Natural killer cell (primary cell): ENCODE measurements at regions of chr17 and their contacts with region 1.

Region 1: GRCh38 chr17:58317421-58318064 is 11.1 kb downstream of the TSPOAP1 start:
- DNase-seq: peak; percentile 64 to 90
- ATAC-seq: peak; percentile 94 to 97 (median 95)
- H3K4me3 ChIP-seq: no peak overlapping the region
- H3K4me3 Mint-ChIP-seq: peak overlapping the region; percentile 47
- H3K27ac ChIP-seq: peak overlapping the region; percentile 71
- H3K27ac Mint-ChIP-seq: peak overlapping the region; percentile 90 to 92
- H3K4me1 ChIP-seq: peaks cover 34% of the 10 kb centered on the region
- H3K4me1 Mint-ChIP-seq: peaks cover 23 to 39% of the 10 kb centered on the region in 2 donors
- H3K27me3 ChIP-seq: no peaks in the 10 kb centered on the region
- H3K27me3 Mint-ChIP-seq: no peaks in the 10 kb centered on the region
- CTCF ChIP-seq: peak; percentile 83

Region 2: DNA sequence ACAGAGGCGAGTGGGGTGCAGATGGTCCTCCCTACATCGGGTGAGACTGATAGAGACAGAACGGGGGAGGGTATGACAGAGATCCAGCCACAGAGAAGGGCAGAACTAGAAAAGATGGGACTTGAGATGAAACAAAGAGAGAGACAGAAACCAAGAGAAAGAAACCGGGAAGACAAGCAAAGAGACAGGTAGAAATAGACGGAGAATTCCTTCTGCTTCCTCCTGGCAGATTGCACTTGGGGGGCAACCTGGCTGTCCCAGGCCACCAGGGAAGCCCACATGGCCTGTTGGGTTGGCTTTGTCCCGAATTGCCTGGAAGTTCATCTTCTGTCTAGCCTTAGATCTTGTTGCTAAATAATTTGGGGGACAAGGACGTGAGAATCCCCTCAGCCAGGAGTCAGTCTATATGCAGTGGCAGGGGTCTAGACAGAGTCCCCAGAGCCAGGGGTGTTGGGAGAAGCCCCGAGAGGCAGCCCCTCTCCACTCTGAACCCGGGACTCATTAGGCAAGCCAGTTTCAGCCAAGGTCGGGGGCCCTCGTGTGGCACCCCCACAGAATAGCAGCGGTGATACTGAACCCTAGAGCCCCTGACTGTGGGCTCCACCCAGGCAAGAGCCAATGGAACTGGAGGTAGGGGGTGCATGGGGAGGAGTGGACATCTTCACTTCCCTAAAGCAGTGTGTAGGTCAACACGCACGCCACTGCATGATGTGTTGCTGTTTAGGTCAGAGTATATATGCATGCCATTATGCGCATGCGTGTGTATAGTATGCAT is 11.7 kb after region 1 on chr17:
- intact Hi-C with region 1: loop called (anchors 1 kb)
- DNase-seq: peak; percentile 70 to 83
- ATAC-seq: peak; percentile 32 to 67 (median 33)
- H3K4me3 ChIP-seq: peak overlapping the region; percentile 94
- H3K4me3 Mint-ChIP-seq: peak overlapping the region; percentile 90
- H3K27ac ChIP-seq: peak overlapping the region; percentile 84
- H3K27ac Mint-ChIP-seq: peak overlapping the region; percentile 87 to 93
- H3K4me1 ChIP-seq: peaks cover 62% of the 10 kb centered on the region
- H3K4me1 Mint-ChIP-seq: peaks cover 68 to 86% of the 10 kb centered on the region in 2 donors
- H3K27me3 ChIP-seq: no peaks in the 10 kb centered on the region
- H3K27me3 Mint-ChIP-seq: no peaks in the 10 kb centered on the region
- CTCF ChIP-seq: peak; percentile 75

Region 3: GRCh38 chr17:58344047-58344790 is 26.7 kb after region 1 on chr17:
- intact Hi-C with region 1: loop called (anchors 1 kb)
- DNase-seq: peak; percentile 83 to 97
- ATAC-seq: peak; percentile 75 to 93 (median 87)
- H3K4me3 ChIP-seq: peak overlapping the region; percentile 59
- H3K4me3 Mint-ChIP-seq: peak overlapping the region; percentile 90
- H3K27ac ChIP-seq: peak overlapping the region; percentile 99
- H3K27ac Mint-ChIP-seq: peak overlapping the region; percentile 87 to 93
- H3K4me1 ChIP-seq: peaks cover 74% of the 10 kb centered on the region
- H3K4me1 Mint-ChIP-seq: peaks cover 79 to 88% of the 10 kb centered on the region in 2 donors
- H3K27me3 ChIP-seq: no peaks in the 10 kb centered on the region
- H3K27me3 Mint-ChIP-seq: no peaks in the 10 kb centered on the region
- CTCF ChIP-seq: no peak

Region 4: GRCh38 chr17:58352014-58352842 is 34.7 kb after region 1 on chr17 and contains the start of gene SUPT4H1:
- intact Hi-C with region 1: loop called (anchors 1 kb)
- DNase-seq: peak; percentile 88 to 97
- ATAC-seq: peak; percentile 91 to 97 (median 95)
- H3K4me3 ChIP-seq: peak within 1 kb of the TSS; percentile 87
- H3K4me3 Mint-ChIP-seq: peak within 1 kb of the TSS; percentile 98
- H3K27ac ChIP-seq: peak within 1 kb of the TSS; percentile 93
- H3K27ac Mint-ChIP-seq: peak within 1 kb of the TSS; percentile 96 to 97
- H3K4me1 ChIP-seq: peaks cover 23% of the 10 kb centered on the region
- H3K4me1 Mint-ChIP-seq: peaks cover 65 to 68% of the 10 kb centered on the region in 2 donors
- H3K27me3 ChIP-seq: no peaks in the 10 kb centered on the region
- H3K27me3 Mint-ChIP-seq: no peaks in the 10 kb centered on the region
- CTCF ChIP-seq: no peak
- total RNA-seq, gene SUPT4H1: 55.9 to 68.3 (median 68.1) TPM

Region 5: GRCh38 chr17:58417300-58418092 is 100.0 kb after region 1 on chr17 and contains the start of gene RNF43:
- intact Hi-C with region 1: loop called (anchors 1 kb)
- DNase-seq: peak; percentile 70 to 95
- ATAC-seq: peak; percentile 100
- H3K4me3 ChIP-seq: no peak within 1 kb of the TSS
- H3K4me3 Mint-ChIP-seq: no peak within 1 kb of the TSS
- H3K27ac ChIP-seq: peak within 1 kb of the TSS; percentile 3
- H3K27ac Mint-ChIP-seq: peak within 1 kb of the TSS; percentile 72 to 84
- H3K4me1 ChIP-seq: peaks cover 5% of the 10 kb centered on the region
- H3K4me1 Mint-ChIP-seq: peaks cover 13 to 15% of the 10 kb centered on the region in 2 donors
- H3K27me3 ChIP-seq: no peaks in the 10 kb centered on the region
- H3K27me3 Mint-ChIP-seq: no peaks in the 10 kb centered on the region
- CTCF ChIP-seq: peak; percentile 72
- total RNA-seq, gene RNF43: 0.95 to 1.1 (median 1.0) TPM

Region 6: DNA sequence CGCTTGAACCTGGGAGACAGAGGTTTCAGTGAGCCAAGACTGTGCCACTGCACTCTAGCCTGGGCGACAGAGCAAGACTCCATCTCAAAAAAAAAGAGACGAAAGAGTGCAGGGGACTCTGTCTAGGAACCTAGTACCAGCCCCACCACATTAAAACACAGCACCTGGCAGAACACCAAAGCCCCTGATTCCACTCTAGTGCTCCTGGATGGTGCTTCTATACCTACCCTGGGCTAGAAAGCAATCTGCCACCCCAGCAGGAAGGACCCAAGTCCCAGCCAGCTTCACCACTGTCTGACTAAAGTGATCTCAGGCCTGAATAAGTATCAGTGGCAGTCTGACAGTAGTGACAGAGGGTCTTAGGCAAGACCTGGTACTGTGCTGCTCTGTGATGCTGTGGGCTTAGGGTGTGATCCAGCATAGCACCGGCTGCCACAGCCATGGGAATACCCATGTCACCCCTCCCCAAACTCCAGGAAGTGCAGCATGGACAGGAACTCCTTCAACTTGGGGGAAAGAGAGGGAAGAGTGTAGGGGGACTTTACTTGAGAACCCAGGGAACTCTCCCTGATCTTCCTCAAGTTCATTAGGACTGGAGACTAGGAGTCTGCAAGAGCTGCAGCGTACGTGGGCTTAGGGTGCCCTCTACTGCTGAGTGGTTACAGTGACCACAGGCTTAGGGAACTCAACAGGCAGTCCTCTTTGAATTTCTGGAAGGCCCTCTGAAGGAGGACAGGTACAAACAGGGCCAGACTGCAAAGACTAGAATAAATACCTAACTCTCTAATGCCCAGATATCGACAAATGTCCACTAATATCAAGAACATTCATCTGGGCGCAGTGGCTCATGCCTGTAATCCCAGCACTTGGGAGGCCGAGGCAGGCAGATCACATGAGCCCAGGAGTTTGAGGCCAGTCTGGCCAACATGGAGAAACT is 129.8 kb after region 1 on chr17:
- intact Hi-C with region 1: loop called (anchors 1 kb)
- DNase-seq: peak; percentile 56 to 80
- ATAC-seq: peak; percentile 77 to 94 (median 89)
- H3K4me3 ChIP-seq: no peak overlapping the region
- H3K4me3 Mint-ChIP-seq: no peak overlapping the region
- H3K27ac ChIP-seq: no peak overlapping the region
- H3K27ac Mint-ChIP-seq: no peak overlapping the region
- H3K4me1 ChIP-seq: no peaks in the 10 kb centered on the region
- H3K4me1 Mint-ChIP-seq: peaks cover 5% of the 10 kb centered on the region in 2 donors
- H3K27me3 ChIP-seq: no peaks in the 10 kb centered on the region
- H3K27me3 Mint-ChIP-seq: no peaks in the 10 kb centered on the region
- CTCF ChIP-seq: peak; percentile 77

Region 7: GRCh38 chr17:58487589-58488427 is 170.3 kb after region 1 on chr17 and contains the start of gene HSF5:
- intact Hi-C with region 1: loop called (anchors 5 kb)
- DNase-seq: peak; percentile 77 to 87
- ATAC-seq: peak; percentile 90
- H3K4me3 ChIP-seq: peak within 1 kb of the TSS; percentile 21
- H3K4me3 Mint-ChIP-seq: peak within 1 kb of the TSS; percentile 73
- H3K27ac ChIP-seq: peak within 1 kb of the TSS; percentile 56
- H3K27ac Mint-ChIP-seq: peak within 1 kb of the TSS; percentile 48 to 51
- H3K4me1 ChIP-seq: peaks cover 9% of the 10 kb centered on the region
- H3K4me1 Mint-ChIP-seq: no peaks in the 10 kb centered on the region
- H3K27me3 ChIP-seq: no peaks in the 10 kb centered on the region
- H3K27me3 Mint-ChIP-seq: no peaks in the 10 kb centered on the region
- CTCF ChIP-seq: peak; percentile 62
- total RNA-seq, gene HSF5: 0.45 to 1.00 (median 0.94) TPM